ENCODE measurements at regions of chr9 and their contacts with region 1.

Region 1: DNA sequence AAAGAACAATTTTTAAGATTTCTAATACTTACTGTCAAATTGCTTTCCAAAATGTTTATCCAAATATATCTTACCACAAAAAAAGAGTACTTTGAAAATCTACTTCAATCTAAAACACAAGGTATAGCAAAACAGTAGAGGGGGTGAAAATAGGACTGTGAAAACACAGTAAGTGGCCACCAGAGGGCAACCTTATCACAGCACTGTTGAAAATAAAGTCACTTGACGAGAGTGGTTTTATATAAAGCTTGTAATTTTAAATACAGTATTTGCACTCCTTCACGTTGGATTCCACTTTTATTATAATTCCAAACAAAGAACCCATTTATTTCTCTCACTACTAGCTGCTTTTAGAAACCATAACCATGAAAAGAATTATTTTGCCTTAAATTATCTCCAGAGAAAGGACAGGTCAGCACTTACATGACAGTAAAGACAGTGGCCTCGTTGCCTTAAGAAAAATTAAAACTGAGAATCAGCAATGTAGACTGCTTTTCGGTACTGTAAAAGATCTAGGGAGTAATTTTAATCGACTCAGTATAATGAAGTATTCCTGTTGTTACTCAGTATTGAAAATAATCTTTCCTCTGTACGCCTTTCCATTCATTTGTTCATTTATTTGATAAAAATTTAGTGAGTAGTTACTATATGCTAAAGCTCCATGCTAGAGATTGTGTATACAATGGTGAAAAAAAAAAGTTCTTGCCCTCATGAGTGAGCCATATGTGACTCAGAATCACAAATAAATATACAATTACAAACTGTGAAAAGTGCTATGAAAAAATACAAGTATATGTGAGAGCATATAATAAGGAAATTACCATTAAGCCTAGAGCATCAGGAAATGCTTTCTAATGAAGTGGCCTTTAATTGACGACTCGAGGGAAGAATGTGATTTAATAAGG is 40.0 kb upstream of the CDK5RAP2 start:
- DNase-seq: no peak
- ATAC-seq: peak; percentile 92
- H3K4me3 ChIP-seq: no peak overlapping the region
- H3K27ac ChIP-seq: no peak overlapping the region
- H3K4me1 ChIP-seq: no peaks in the 10 kb centered on the region
- H3K27me3 ChIP-seq: no peaks in the 10 kb centered on the region
- CTCF ChIP-seq: peak; percentile 74; the same call in 1 of the 2 replicates

Region 2: DNA sequence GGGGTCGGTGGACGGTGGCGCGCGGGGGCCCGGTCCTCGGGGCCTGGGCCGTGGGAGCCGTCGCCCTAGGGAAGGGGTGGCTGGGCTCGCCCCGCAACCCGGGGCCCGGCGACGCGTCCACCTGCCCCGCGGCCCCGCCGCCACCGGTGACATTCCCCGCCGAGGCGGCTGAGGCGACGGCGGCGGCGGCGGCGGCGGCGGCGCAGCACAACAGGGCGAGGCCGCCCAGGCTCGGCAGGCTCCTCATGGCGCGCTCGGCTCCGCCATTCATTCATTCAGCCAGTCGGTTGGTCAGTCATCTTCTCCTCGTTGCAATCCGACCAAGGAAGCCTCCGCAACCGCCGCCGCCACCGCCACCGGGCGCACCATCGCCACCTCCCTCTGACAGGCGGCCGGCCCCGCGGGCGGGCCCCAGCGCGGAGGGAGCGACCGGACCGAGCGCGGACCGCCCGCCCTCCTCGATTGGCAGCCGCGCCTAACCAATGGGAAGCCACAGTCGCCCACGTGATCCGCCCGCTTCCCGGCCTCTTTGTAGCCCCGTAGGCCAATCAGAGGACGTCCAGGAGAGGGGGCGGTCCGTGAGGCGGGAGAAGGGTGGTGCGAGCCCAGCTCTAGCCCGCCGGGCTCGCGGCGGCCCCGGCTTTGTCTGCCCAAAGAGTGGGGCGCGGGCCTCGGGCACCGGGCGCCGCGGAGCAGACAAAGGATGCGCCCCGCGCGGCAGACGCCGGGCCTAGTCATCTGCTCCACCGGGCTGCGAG is 94.3 kb after region 1 on chr9 and contains the start of gene MEGF9:
- CTCF ChIA-PET with region 1: no interaction called
- POLR2A ChIA-PET with region 1: no interaction called
- in situ Hi-C with region 1: no loop called
- intact Hi-C with region 1: loop called (anchors 5 kb)
- DNase-seq: peak; percentile 58
- ATAC-seq: peak; percentile 95
- H3K4me3 ChIP-seq: peak within 1 kb of the TSS; percentile 66 to 75
- H3K27ac ChIP-seq: peak within 1 kb of the TSS; percentile 76
- H3K4me1 ChIP-seq: peaks cover 25% of the 10 kb centered on the region
- H3K27me3 ChIP-seq: no peaks in the 10 kb centered on the region
- CTCF ChIP-seq: no peak
- total RNA-seq, gene MEGF9: 6.3 TPM

Region 3: DNA sequence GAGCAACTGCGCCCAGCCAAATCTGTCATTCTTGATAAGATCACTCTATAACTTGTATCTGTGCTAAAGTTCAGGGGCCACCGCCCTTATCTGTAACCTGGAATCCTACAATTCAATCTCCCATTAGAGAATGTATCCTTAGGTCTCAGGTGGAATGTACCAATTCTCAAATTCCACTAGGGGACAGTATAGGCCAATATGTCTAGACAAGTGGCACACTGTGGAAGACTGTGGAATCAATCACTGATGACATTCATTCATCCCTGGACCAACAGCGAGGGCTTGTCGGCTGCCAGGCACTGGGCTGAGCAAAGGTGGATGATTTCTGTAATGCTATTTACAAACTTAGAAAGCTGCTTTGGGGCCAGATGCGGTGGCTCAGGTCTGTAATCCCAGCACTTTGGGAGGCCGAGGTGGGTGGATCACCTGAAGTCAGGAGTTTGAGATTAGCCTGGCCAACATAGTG is 123.0 kb after region 1 on chr9:
- CTCF ChIA-PET with region 1: no interaction called
- POLR2A ChIA-PET with region 1: no interaction called
- in situ Hi-C with region 1: no loop called
- intact Hi-C with region 1: no loop called
- DNase-seq: peak; percentile 17
- ATAC-seq: peak; percentile 88
- H3K4me3 ChIP-seq: no peak overlapping the region
- H3K27ac ChIP-seq: no peak overlapping the region
- H3K4me1 ChIP-seq: no peaks in the 10 kb centered on the region
- H3K27me3 ChIP-seq: no peaks in the 10 kb centered on the region
- CTCF ChIP-seq: peak; percentile 77

Measured in Panc1 (cell line).